Dorsolateral prefrontal cortex (tissue), 120 donors: ENCODE measurements at regions of chr1 and their contacts with region 1.

Region 1: GRCh38 chr1:231337472-231338269 is at the start of gene EXOC8:
- DNase-seq: peak; percentile 89 to 96 (median 92)
- H3K4me3 ChIP-seq: peak within 1 kb of the TSS; percentile 63 to 99 (median 92)
- H3K27ac ChIP-seq: peak within 1 kb of the TSS; percentile 51 to 97 (median 86)
- H3K27me3 ChIP-seq: no peaks in the 10 kb centered on the region
- CTCF ChIP-seq: peak in 19 of 56 donors; percentile 7 to 47 (median 22)
- total RNA-seq, gene EXOC8: 13.8 to 26.2 (median 20.8) TPM

Region 2: DNA sequence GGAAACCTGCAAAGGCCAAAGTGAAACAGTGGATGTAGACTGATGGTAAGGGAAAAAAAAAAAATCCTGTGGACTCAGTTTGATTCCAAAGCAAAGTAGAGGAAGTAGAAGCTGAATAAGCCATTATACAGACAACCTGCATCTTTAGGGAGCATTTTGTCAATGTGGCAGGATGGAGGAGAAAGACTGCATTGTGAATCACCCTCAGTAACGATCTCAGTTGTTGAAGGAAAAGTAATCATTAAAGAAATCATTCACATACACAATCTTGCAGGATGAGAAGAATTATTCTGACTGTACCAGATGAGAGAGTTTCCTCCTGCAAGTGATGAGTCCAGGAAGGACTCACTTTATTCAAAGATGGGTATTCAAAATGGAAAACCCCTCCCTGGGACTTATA is 220.9 kb before region 1 on chr1:
- intact Hi-C with region 1: no loop called
- DNase-seq: no peak
- H3K4me3 ChIP-seq: no peak overlapping the region
- H3K27ac ChIP-seq: no peak overlapping the region
- H3K27me3 ChIP-seq: peaks cover 0 to 3% (median 0%) of the 10 kb centered on the region in 45 donors
- CTCF ChIP-seq: no peak

Region 3: DNA sequence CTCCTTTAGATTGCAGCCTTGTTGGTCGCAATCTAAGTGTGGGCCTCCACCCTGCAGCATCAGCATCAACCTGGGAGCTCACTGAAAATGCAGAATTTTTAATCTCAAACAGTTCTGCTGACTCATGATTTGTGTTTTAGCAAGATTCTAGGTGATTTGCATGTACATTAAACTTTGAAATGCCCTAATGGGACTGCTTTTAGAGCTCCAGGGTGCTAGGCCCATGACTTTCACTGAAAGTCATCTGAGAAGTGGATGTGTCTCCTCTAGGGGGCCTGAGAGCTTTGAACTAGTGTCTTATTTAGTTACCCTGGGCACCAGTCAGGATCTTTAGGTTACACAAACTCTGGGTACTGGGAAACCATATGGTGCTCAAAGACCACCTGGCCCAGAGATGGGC is 166.8 kb before region 1 on chr1:
- intact Hi-C with region 1: no loop called
- DNase-seq: no peak
- H3K4me3 ChIP-seq: no peak overlapping the region
- H3K27ac ChIP-seq: no peak overlapping the region
- H3K27me3 ChIP-seq: peaks cover 0 to 10% (median 0%) of the 10 kb centered on the region in 45 donors
- CTCF ChIP-seq: peak in 1 of 56 donors; percentile 8

Region 4: GRCh38 chr1:231240883-231241735 is 96.6 kb before region 1 on chr1 and contains the start of gene GNPAT:
- intact Hi-C with region 1: loop called (anchors 2 to 5 kb)
- DNase-seq: peak; percentile 69 to 94 (median 77)
- H3K4me3 ChIP-seq: peak within 1 kb of the TSS; percentile 63 to 99 (median 91)
- H3K27ac ChIP-seq: peak within 1 kb of the TSS in 56 of 59 donors; percentile 7 to 91 (median 80)
- H3K27me3 ChIP-seq: no peaks in the 10 kb centered on the region
- CTCF ChIP-seq: peak in 46 of 56 donors; percentile 14 to 62 (median 32)
- total RNA-seq, gene GNPAT: 23.2 to 39.6 (median 30.0) TPM

Region 5: DNA sequence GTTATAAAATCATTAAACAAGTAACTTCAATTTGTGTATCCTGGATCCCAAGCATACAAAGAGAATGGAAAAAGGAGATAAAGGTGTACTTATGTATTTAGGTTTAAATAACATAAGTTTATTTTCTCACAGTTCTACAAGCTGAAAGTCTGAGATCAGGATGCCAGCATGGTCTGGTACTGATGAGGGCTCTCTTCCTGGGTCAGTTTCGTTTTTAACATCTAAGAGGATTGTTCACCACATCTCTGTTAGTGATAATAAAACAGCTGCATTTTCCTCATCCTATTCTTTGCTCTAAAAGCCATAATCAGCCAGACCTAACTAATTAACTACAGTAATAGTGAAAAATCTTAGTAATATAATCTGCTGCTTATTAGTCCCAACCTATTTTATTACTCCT is 79.2 kb after region 1 on chr1:
- intact Hi-C with region 1: loop called (anchors 2 kb)
- DNase-seq: no peak
- H3K4me3 ChIP-seq: peak overlapping the region in 56 of 59 donors; percentile 9 to 96 (median 82)
- H3K27ac ChIP-seq: peak overlapping the region in 1 of 59 donors; percentile 22
- H3K27me3 ChIP-seq: no peaks in the 10 kb centered on the region
- CTCF ChIP-seq: no peak